ENCODE measurements at regions of chr1 and their contacts with region 1.

Region 1: GRCh38 chr1:209354111-209354839 is 229.2 kb upstream of the CAMK1G start:
- DNase-seq: peak; percentile 98
- ATAC-seq: peak; percentile 93
- H3K4me3 ChIP-seq: no peak overlapping the region
- H3K27ac ChIP-seq: peak overlapping the region; percentile 19; the same call in 1 of the 2 replicates
- H3K4me1 ChIP-seq: peaks cover 36% of the 10 kb centered on the region
- H3K27me3 ChIP-seq: no peaks in the 10 kb centered on the region
- CTCF ChIP-seq: peak; percentile 97

Region 2: DNA sequence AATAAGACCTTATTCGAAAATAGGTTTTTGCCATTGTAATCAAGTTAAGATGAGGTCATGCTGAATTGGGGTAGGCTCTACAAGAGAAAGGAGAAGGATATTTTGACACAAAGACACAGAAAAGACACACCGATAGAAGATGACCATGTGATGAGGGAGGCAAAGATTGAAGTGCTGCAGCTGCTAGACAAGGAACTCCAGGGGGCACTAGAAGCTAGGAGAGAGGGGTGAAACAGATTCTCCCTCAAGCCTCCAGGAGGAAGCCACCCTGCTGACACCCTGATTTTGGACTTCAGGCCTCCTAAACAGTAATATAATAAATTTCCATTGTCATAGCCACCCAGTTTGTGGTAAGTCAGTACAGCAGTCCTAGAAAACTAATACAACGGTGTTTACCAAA is 277.6 kb before region 1 on chr1:
- CTCF ChIA-PET with region 1: no interaction called
- POLR2A ChIA-PET with region 1: no interaction called
- intact Hi-C with region 1: loop called (anchors 2 kb)
- DNase-seq: peak; percentile 67
- ATAC-seq: no peak
- H3K4me3 ChIP-seq: no peak overlapping the region
- H3K27ac ChIP-seq: no peak overlapping the region
- H3K4me1 ChIP-seq: peaks cover 43% of the 10 kb centered on the region
- H3K27me3 ChIP-seq: no peaks in the 10 kb centered on the region
- CTCF ChIP-seq: peak; percentile 86

Region 3: DNA sequence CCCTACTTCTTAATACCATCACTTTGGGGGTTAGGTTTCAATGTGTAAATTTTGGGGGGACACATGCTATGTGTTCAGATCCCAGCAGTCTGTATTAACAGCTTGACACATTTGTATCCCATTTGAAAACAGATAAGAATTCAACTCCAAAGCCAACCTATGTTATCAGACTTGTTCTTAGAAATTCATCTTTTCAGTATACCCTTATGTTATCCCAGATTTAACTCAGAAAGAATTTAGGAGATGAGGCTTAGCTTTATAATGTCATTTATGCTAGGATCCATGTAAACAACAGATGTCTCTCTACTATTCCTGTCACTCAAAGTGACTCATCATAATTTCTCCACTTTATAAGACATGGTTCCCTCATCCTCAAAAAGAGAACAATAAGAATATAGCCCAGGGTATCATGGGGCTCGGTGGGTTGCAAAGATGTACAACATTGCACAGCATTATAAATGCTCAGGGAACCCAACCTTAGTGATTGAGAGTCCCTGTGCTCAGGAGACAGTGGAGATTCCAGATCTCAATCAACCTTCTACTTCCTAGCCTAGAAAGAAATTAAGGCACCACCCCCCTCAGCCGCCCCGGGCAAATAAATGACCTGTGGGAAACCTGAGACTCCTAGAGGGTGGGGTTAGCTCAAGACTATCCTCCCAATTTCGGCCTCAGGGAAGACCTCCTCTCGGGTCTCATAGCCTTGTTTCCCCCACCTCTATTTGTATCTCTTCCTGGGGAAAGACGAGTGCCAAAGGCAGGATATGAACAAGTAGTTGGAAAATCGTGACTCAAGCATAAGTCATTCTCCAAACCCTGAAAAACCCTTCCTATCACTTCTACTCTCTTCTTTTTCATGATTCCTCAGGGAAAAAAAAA is 35.9 kb before region 1 on chr1:
- CTCF ChIA-PET with region 1: no interaction called
- POLR2A ChIA-PET with region 1: no interaction called
- intact Hi-C with region 1: loop called (anchors 1 kb)
- DNase-seq: peak; percentile 97
- ATAC-seq: peak; percentile 87
- H3K4me3 ChIP-seq: peak overlapping the region; percentile 37
- H3K27ac ChIP-seq: peak overlapping the region; percentile 93
- H3K4me1 ChIP-seq: peaks cover 35% of the 10 kb centered on the region
- H3K27me3 ChIP-seq: no peaks in the 10 kb centered on the region
- CTCF ChIP-seq: no peak

Region 4: GRCh38 chr1:209335178-209335577 is 19.1 kb before region 1 on chr1:
- CTCF ChIA-PET with region 1: no interaction called
- POLR2A ChIA-PET with region 1: no interaction called
- intact Hi-C with region 1: no loop called
- DNase-seq: peak; percentile 61
- ATAC-seq: peak; percentile 94
- H3K4me3 ChIP-seq: no peak overlapping the region
- H3K27ac ChIP-seq: no peak overlapping the region
- H3K4me1 ChIP-seq: peaks cover 4% of the 10 kb centered on the region; the same call in 1 of the 2 replicates
- H3K27me3 ChIP-seq: no peaks in the 10 kb centered on the region
- CTCF ChIP-seq: peak; percentile 94

Region 5: GRCh38 chr1:209435654-209436566 is 81.6 kb after region 1 on chr1:
- CTCF ChIA-PET with region 1: interaction called, 5 read pairs
- POLR2A ChIA-PET with region 1: no interaction called
- intact Hi-C with region 1: loop called (anchors 1 kb)
- DNase-seq: peak; percentile 98
- ATAC-seq: peak; percentile 81
- H3K4me3 ChIP-seq: no peak overlapping the region
- H3K27ac ChIP-seq: peak overlapping the region; percentile 88
- H3K4me1 ChIP-seq: peaks cover 53% of the 10 kb centered on the region
- H3K27me3 ChIP-seq: no peaks in the 10 kb centered on the region
- CTCF ChIP-seq: peak; percentile 98

Region 6: GRCh38 chr1:209513226-209513625 is 159.0 kb after region 1 on chr1:
- CTCF ChIA-PET with region 1: no interaction called
- POLR2A ChIA-PET with region 1: no interaction called
- intact Hi-C with region 1: loop called (anchors 1 kb)
- DNase-seq: peak; percentile 85
- ATAC-seq: peak; percentile 76
- H3K4me3 ChIP-seq: no peak overlapping the region
- H3K27ac ChIP-seq: no peak overlapping the region
- H3K4me1 ChIP-seq: no peaks in the 10 kb centered on the region
- H3K27me3 ChIP-seq: no peaks in the 10 kb centered on the region
- CTCF ChIP-seq: peak; percentile 89

Measured in PC-3 (cell line).